Caco-2 (cell line): ENCODE measurements at regions of chr3 and their contacts with region 1.

Region 1: GRCh38 chr3:172341482-172342059 is 106.7 kb downstream of the GHSR start:
- DNase-seq: peak in 1 of 2 experiments; percentile 57
- H3K4me3 ChIP-seq: no peak overlapping the region
- H3K4me3 Mint-ChIP-seq: no peak overlapping the region
- H3K27ac Mint-ChIP-seq: no peak overlapping the region
- H3K4me1 ChIP-seq: no peaks in the 10 kb centered on the region
- H3K4me1 Mint-ChIP-seq: no peaks in the 10 kb centered on the region
- H3K27me3 ChIP-seq: no peaks in the 10 kb centered on the region
- H3K27me3 Mint-ChIP-seq: no peaks in the 10 kb centered on the region
- CTCF ChIP-seq: peak; percentile 49 to 54

Region 2: DNA sequence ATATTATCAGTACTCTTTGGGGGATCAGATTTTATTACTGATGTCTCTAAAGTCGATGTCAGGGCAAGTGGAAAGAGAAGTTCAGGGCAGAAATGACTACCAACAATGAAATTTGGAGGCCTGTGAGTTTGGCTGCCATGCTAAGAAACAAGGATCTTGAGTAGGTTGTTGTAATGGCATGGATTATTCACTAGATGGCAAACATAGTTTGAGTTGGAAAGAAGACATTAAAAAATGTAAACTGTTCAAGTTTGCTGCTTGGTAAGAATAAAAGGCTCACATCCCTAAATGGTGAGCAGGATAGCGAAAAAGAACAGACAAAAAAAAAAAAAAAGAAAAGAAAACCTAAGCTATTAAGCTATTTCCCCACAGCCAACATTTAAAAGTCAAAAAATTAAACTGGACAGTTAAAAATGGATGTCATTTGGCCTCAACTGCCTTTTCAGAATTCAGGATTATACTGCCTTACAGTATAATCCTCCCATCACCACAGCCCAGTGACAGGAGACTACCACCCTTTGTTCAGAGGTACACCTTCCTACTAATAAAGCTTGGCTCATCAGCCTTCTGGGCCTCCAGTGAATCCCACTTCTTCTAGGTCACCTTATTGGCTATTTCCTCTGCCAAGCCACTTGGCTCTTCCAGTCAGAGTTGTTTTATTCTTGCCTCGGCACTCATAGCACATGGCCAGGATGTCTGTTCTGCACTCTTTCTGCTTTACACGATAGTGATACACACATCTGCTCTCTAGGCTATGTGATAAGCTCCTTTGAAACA is 695.0 kb before region 1 on chr3:
- CTCF ChIA-PET with region 1: no interaction called
- POLR2A ChIA-PET with region 1: no interaction called
- intact Hi-C with region 1: loop called (anchors 5 kb)
- DNase-seq: peak in 1 of 2 experiments; percentile 21
- H3K4me3 ChIP-seq: no peak overlapping the region
- H3K4me3 Mint-ChIP-seq: no peak overlapping the region
- H3K27ac Mint-ChIP-seq: no peak overlapping the region
- H3K4me1 ChIP-seq: no peaks in the 10 kb centered on the region
- H3K4me1 Mint-ChIP-seq: no peaks in the 10 kb centered on the region
- H3K27me3 ChIP-seq: no peaks in the 10 kb centered on the region
- H3K27me3 Mint-ChIP-seq: no peaks in the 10 kb centered on the region
- CTCF ChIP-seq: peak; percentile 55 to 66

Region 3: DNA sequence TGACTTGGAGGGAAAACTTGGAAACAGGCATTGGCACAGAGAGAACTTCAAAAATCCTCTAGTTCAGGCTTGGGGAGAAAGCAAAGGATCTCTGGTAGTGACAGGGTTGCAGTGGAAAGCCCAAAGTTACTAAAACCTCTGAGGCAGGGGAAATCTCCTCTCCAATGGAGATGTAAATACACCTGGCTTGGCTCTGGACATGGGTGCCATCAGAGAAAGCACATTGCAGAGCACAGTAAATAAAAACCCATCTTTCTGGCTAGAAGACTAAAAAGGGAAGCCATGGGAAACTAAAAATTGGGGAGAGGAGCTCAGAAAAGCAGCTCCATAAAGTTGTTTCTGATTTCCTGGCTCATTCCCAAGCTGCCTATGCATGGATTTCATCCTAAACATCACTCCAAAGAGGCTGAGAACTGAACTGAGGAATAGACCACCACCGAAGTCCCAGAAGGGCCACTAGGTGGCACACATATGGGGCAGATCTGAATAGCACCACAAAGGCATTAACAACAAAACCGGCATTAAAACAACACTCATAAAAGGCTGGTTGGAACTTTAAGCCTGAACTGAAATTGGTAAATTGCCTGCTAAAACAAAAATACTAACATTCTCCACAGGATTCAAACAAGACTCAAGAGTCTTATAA is 637.7 kb before region 1 on chr3:
- CTCF ChIA-PET with region 1: no interaction called
- POLR2A ChIA-PET with region 1: no interaction called
- intact Hi-C with region 1: loop called (anchors 1 kb)
- DNase-seq: peak in 1 of 2 experiments; percentile 42
- H3K4me3 ChIP-seq: no peak overlapping the region
- H3K4me3 Mint-ChIP-seq: no peak overlapping the region
- H3K27ac Mint-ChIP-seq: no peak overlapping the region
- H3K4me1 ChIP-seq: no peaks in the 10 kb centered on the region
- H3K4me1 Mint-ChIP-seq: no peaks in the 10 kb centered on the region
- H3K27me3 ChIP-seq: no peaks in the 10 kb centered on the region
- H3K27me3 Mint-ChIP-seq: no peaks in the 10 kb centered on the region
- CTCF ChIP-seq: peak in 1 of 2 experiments; percentile 61

Region 4: GRCh38 chr3:171781711-171782127 is 559.9 kb before region 1 on chr3:
- CTCF ChIA-PET with region 1: no interaction called
- POLR2A ChIA-PET with region 1: no interaction called
- intact Hi-C with region 1: loop called (anchors 2 kb)
- DNase-seq: no peak
- H3K4me3 ChIP-seq: no peak overlapping the region
- H3K4me3 Mint-ChIP-seq: no peak overlapping the region
- H3K27ac Mint-ChIP-seq: no peak overlapping the region
- H3K4me1 ChIP-seq: no peaks in the 10 kb centered on the region
- H3K4me1 Mint-ChIP-seq: peaks cover 10% of the 10 kb centered on the region
- H3K27me3 ChIP-seq: no peaks in the 10 kb centered on the region
- H3K27me3 Mint-ChIP-seq: no peaks in the 10 kb centered on the region
- CTCF ChIP-seq: no peak